ENCODE measurements at regions of chr16 and their contacts with region 1.

Region 1: DNA sequence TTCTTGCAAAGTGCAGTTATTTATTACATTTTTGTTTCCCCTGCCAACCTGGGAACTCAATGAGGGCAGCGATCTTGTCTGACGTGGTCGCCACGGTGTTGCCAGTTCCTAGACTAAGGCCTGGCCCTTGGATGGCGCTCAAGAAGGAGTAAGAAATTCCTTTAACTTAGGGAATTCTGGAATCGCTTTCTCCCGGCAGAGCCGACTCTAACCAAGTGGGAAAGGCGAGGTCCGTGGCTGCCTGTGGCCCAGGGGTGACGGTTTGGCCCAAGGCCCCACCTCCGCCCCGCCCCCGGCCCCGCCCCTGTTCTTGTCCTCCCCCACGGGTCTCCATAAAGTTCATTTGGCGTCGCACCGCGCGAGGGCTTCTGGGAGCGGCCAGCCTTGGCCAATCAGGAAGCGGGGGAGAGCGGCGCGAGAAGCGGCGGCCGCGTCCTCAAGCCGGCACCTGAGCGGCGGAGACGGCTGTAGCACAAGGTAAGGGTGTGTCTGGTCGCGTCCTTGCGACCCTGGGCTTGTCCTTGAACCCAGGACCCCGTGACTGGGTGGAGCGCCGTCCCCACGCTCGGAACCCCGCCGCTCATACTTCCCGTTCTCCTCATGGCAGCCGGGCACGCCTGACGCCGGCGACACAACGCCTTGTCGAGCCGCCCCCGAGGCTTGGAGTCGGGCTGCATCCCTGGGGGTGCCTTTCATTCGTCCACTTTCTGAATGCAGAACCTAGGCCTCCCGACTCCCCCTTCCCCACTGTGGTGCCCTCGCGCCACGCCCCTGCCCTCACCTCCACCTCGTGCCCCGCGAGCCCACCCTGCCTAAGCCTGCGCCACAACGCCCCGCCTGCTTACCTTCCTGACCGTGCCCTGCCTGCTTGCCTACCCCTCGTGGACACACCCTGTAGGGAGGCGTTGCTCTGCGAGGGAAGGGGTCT is at the start of gene NUP93:
- DNase-seq: peak; percentile 95
- ATAC-seq: peak; percentile 83
- H3K4me3 Mint-ChIP-seq: no peak within 1 kb of the TSS
- H3K27ac Mint-ChIP-seq: peak within 1 kb of the TSS; percentile 85
- H3K4me1 Mint-ChIP-seq: peaks cover 14% of the 10 kb centered on the region
- H3K27me3 Mint-ChIP-seq: no peaks in the 10 kb centered on the region
- total RNA-seq, gene NUP93: 131 to 154 TPM

Region 2: DNA sequence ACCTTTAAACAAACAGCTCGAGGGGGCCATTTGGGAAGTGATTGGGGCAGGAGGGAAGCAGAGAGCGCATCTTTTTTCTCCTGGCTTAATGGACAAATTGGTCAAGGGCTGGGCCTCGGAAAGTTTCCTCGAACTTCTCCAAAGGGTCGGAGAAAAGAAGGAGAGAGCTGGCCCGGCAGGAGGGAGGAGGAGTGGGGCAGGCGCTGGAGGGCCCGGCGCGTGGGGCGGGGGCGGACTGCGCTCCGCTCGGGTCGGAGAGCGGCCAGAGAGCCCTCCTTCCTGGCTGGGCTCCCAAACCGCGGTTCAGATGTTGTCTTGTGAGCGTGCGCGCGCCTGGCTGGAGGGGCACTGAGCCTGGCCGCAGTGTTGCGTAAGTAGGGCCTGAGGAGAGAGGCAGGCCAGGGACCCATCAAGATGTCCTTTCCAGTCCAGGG is 1249.8 kb before region 1 on chr16:
- CTCF ChIA-PET with region 1: no interaction called
- POLR2A ChIA-PET with region 1: no interaction called
- intact Hi-C with region 1: no loop called
- DNase-seq: no peak
- ATAC-seq: no peak
- H3K4me3 Mint-ChIP-seq: no peak overlapping the region
- H3K27ac Mint-ChIP-seq: no peak overlapping the region
- H3K4me1 Mint-ChIP-seq: peaks cover 2% of the 10 kb centered on the region
- H3K27me3 Mint-ChIP-seq: peaks cover 43% of the 10 kb centered on the region

Region 3: GRCh38 chr16:56356276-56357240 is 373.4 kb before region 1 on chr16:
- CTCF ChIA-PET with region 1: no interaction called
- POLR2A ChIA-PET with region 1: no interaction called
- intact Hi-C with region 1: loop called in 1 of 2 experiments (anchors 2 kb)
- DNase-seq: peak; percentile 77
- ATAC-seq: peak; percentile 84
- H3K4me3 Mint-ChIP-seq: peak overlapping the region; percentile 78
- H3K27ac Mint-ChIP-seq: peak overlapping the region; percentile 98
- H3K4me1 Mint-ChIP-seq: peaks cover 29% of the 10 kb centered on the region
- H3K27me3 Mint-ChIP-seq: no peaks in the 10 kb centered on the region

Region 4: GRCh38 chr16:56425439-56425832 is 304.6 kb before region 1 on chr16 and contains the start of gene AMFR:
- CTCF ChIA-PET with region 1: no interaction called
- POLR2A ChIA-PET with region 1: no interaction called
- intact Hi-C with region 1: loop called in 1 of 2 experiments (anchors 1 kb)
- DNase-seq: peak; percentile 80
- ATAC-seq: peak; percentile 97
- H3K4me3 Mint-ChIP-seq: peak within 1 kb of the TSS; percentile 90
- H3K27ac Mint-ChIP-seq: peak within 1 kb of the TSS; percentile 82
- H3K4me1 Mint-ChIP-seq: peaks cover 54% of the 10 kb centered on the region
- H3K27me3 Mint-ChIP-seq: no peaks in the 10 kb centered on the region
- total RNA-seq, gene AMFR: 34.0 to 48.0 TPM

Region 5: GRCh38 chr16:56519459-56520250 is 210.3 kb before region 1 on chr16 and contains the start of gene BBS2:
- CTCF ChIA-PET with region 1: no interaction called
- POLR2A ChIA-PET with region 1: no interaction called
- intact Hi-C with region 1: loop called in 1 of 2 experiments (anchors 1 kb)
- DNase-seq: peak; percentile 93
- ATAC-seq: peak; percentile 90
- H3K4me3 Mint-ChIP-seq: peak within 1 kb of the TSS; percentile 79
- H3K27ac Mint-ChIP-seq: peak within 1 kb of the TSS; percentile 61
- H3K4me1 Mint-ChIP-seq: peaks cover 32% of the 10 kb centered on the region
- H3K27me3 Mint-ChIP-seq: no peaks in the 10 kb centered on the region
- total RNA-seq, gene BBS2: 15.4 to 23.2 TPM

Region 6: DNA sequence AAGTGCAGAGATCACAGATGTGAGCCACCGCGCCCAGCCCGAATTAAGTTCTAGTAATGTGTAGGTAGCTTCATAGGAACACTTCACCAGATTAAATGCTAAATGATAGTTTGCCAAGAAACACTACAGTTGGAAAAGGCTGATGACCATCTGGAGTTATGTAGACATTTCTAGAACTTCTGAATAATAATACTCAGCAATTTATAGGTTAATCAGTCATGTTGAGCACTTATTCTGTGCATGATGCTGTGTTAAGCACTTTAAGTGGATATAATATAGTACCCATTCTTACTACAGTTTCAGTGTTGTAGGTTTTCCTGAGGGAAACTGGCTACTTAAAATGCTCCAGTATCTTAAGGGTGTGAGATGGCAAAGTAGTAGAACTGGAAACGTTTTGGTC is 45.2 kb after region 1 on chr16:
- CTCF ChIA-PET with region 1: no interaction called
- POLR2A ChIA-PET with region 1: no interaction called
- intact Hi-C with region 1: no loop called
- DNase-seq: no peak
- ATAC-seq: no peak
- H3K4me3 Mint-ChIP-seq: no peak overlapping the region
- H3K27ac Mint-ChIP-seq: no peak overlapping the region
- H3K4me1 Mint-ChIP-seq: peaks cover 33% of the 10 kb centered on the region
- H3K27me3 Mint-ChIP-seq: no peaks in the 10 kb centered on the region

Region 7: DNA sequence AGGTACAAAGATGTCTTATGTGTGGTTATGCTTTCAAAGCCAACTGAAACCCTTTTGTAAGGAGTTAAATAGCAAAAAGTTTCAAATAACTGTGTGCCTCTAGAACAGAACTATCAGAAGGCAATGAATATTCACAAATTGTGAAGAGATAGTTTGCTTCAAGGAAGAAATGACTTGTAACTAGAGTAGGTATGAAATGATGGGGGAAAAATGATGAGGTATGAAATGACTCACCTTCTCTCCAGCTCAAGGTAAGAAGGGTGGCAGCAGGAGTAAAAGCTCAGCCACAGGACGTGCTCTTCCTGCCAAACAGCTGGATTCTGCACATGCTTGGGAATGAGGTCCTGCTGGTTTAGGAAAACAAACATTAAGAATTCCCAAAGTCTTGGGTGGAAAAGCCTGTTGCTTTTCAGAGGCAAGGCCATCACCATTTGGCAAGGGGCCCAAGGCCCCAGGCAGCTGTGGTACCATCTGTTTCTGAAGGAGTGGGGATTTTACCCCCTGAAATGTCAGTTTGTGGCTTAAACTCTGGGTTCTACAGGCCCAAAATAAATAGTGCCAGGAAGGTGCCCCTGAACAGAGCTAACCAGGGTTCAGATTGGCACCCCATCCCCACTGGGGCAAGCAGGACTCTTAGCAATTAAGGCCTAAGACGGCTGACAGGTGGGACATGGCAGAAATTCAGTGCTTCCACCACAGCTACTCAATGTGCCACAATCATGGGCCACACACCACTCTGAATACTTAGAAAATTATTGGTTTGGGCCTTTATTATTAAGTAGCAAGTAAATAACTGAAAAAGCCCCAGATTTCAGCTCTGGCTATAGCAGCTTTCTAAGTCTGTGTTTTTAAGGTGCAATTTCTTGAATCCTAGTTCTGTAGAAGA is 215.2 kb after region 1 on chr16:
- CTCF ChIA-PET with region 1: no interaction called
- POLR2A ChIA-PET with region 1: no interaction called
- intact Hi-C with region 1: loop called in 1 of 2 experiments (anchors 5 kb)
- DNase-seq: peak; percentile 61
- ATAC-seq: peak; percentile 79
- H3K4me3 Mint-ChIP-seq: peak overlapping the region; percentile 51
- H3K27ac Mint-ChIP-seq: peak overlapping the region; percentile 91
- H3K4me1 Mint-ChIP-seq: peaks cover 63% of the 10 kb centered on the region
- H3K27me3 Mint-ChIP-seq: no peaks in the 10 kb centered on the region

Measured in activated CD4-positive, alpha-beta T cell treated with anti-CD3 and anti-CD28 coated beads for 36 hours (primary cell).